Heart left ventricle (tissue), 16 donors: ENCODE measurements at regions of chr22 and their contacts with region 1.

Region 1: GRCh38 chr22:36966851-36967540 is 52.3 kb downstream of the TST start:
- DNase-seq: no peak
- ATAC-seq: no peak
- H3K4me3 ChIP-seq: no peak overlapping the region
- H3K27ac ChIP-seq: no peak overlapping the region
- H3K4me1 ChIP-seq: no peaks in the 10 kb centered on the region
- H3K27me3 ChIP-seq: peaks cover 0 to 8% (median 0%) of the 10 kb centered on the region in 9 donors
- CTCF ChIP-seq: no peak
- POLR2A ChIP-seq: no peak

Region 2: GRCh38 chr22:36856121-36856791 is 110.7 kb before region 1 on chr22:
- intact Hi-C with region 1: loop called in 1 of 10 experiments (anchors 5 kb)
- DNase-seq: peak; percentile 89 to 95 (median 91)
- ATAC-seq: peak; percentile 77 to 93 (median 90)
- H3K4me3 ChIP-seq: no peak overlapping the region
- H3K27ac ChIP-seq: no peak overlapping the region
- H3K4me1 ChIP-seq: peaks cover 0 to 42% (median 8%) of the 10 kb centered on the region in 12 donors
- H3K27me3 ChIP-seq: peaks cover 0 to 11% (median 0%) of the 10 kb centered on the region in 9 donors
- CTCF ChIP-seq: peak; percentile 99 to 100 (median 100)
- POLR2A ChIP-seq: no peak

Region 3: GRCh38 chr22:36998620-36999340 is 31.8 kb after region 1 on chr22:
- intact Hi-C with region 1: no loop called
- DNase-seq: no peak
- ATAC-seq: no peak
- H3K4me3 ChIP-seq: no peak overlapping the region
- H3K27ac ChIP-seq: no peak overlapping the region
- H3K4me1 ChIP-seq: no peaks in the 10 kb centered on the region
- H3K27me3 ChIP-seq: no peaks in the 10 kb centered on the region
- CTCF ChIP-seq: no peak
- POLR2A ChIP-seq: no peak

Region 4: GRCh38 chr22:37019309-37020125 is 52.5 kb after region 1 on chr22 and contains the starts of genes MPST and TST:
- intact Hi-C with region 1: loop called in 1 of 10 experiments (anchors 10 kb)
- DNase-seq: peak; percentile 86 to 91 (median 90)
- ATAC-seq: peak; percentile 72 to 90 (median 88)
- H3K4me3 ChIP-seq: peak within 1 kb of the TSS; percentile 66 to 99 (median 90)
- H3K27ac ChIP-seq: peak within 1 kb of the TSS; percentile 87 to 98 (median 96)
- H3K4me1 ChIP-seq: peaks cover 9 to 80% (median 49%) of the 10 kb centered on the region in 12 donors
- H3K27me3 ChIP-seq: no peaks in the 10 kb centered on the region
- CTCF ChIP-seq: peak in 6 of 12 donors; percentile 9 to 41 (median 18)
- POLR2A ChIP-seq: peak; percentile 27 to 85
- total RNA-seq, gene MPST: 27.5 to 157 (median 52.9) TPM
- total RNA-seq, gene TST: 35.8 to 143 (median 58.1) TPM